Left ventricle myocardium superior (tissue), 1 donor: ENCODE measurements at regions of chr3 and their contacts with region 1.

Region 1: GRCh38 chr3:9067352-9067975 is 104.2 kb upstream of the RAD18 start:
- DNase-seq: no peak
- ATAC-seq: peak; percentile 80

Region 2: GRCh38 chr3:8987645-8988383 is 79.7 kb before region 1 on chr3:
- intact Hi-C with region 1: loop called (anchors 5 kb)
- DNase-seq: peak; percentile 72
- ATAC-seq: peak; percentile 82